ENCODE measurements at regions of chr15 and their contacts with region 1.

Region 1: DNA sequence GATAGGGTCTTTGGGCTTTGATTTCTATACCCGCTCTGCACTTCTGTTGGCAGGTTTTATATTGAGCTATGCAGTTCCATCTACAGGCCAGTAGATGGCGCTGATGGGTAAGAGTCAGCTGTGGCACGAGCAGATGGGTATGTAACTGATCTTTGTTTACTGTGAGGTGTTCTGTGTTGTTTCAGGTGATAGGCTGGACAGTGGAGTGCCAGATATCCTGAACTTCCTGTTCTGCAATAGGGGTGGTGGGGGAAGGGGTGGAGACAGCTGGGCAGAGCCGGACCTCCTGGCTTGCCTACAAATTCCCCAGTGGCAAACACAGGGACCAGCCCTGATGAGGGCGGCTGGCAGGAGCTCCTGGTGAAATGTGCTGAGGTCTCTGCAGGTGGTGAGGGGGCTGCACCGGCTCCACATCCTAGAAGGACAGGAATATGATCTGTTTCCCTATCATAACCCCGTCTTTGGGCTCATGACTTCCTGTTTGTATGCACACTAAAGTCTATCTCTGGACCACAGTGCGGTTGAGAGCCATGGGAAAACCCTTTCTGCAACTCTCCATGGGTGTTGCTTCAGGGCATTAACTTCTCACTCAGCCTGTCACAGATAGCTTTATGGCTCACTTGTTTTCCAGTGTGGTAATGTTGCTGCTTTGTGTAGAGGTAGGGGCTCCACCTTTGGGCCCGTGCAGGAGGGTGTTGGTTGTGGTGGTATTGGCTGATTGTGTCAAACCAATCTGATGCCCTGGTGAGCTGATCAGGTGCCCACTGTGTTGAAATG is 13.4 kb upstream of the FAM98B start:
- DNase-seq: peak; percentile 64
- H3K4me3 Mint-ChIP-seq: no peak overlapping the region
- H3K27ac Mint-ChIP-seq: no peak overlapping the region
- H3K4me1 Mint-ChIP-seq: peaks cover 11% of the 10 kb centered on the region
- H3K27me3 Mint-ChIP-seq: peaks cover 49% of the 10 kb centered on the region

Region 2: DNA sequence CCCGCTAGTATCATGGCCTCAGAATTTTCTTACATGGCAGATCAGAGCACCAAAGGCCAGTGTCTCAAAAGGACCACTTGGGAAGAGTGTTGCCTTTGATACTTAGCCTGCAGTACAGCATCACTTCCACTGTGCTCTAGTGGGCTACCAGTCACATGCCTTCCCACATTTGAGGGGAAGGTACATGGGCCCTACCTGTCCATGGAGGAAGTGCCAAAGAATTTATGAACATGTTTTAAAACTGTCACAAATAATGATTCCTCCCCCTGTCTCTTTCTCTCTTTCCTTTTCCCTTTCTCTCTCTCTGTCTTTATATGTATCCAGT is 10.1 kb before region 1 on chr15:
- CTCF ChIA-PET with region 1: interaction called, 16 read pairs
- DNase-seq: no peak
- H3K4me3 Mint-ChIP-seq: no peak overlapping the region
- H3K27ac Mint-ChIP-seq: no peak overlapping the region
- H3K4me1 Mint-ChIP-seq: no peaks in the 10 kb centered on the region
- H3K27me3 Mint-ChIP-seq: peaks cover 41% of the 10 kb centered on the region

Region 3: GRCh38 chr15:38461066-38461833 is 20.7 kb after region 1 on chr15:
- CTCF ChIA-PET with region 1: interaction called, 10 read pairs
- DNase-seq: no peak
- H3K4me3 Mint-ChIP-seq: no peak overlapping the region
- H3K27ac Mint-ChIP-seq: no peak overlapping the region
- H3K4me1 Mint-ChIP-seq: peaks cover 34% of the 10 kb centered on the region
- H3K27me3 Mint-ChIP-seq: no peaks in the 10 kb centered on the region

Region 4: DNA sequence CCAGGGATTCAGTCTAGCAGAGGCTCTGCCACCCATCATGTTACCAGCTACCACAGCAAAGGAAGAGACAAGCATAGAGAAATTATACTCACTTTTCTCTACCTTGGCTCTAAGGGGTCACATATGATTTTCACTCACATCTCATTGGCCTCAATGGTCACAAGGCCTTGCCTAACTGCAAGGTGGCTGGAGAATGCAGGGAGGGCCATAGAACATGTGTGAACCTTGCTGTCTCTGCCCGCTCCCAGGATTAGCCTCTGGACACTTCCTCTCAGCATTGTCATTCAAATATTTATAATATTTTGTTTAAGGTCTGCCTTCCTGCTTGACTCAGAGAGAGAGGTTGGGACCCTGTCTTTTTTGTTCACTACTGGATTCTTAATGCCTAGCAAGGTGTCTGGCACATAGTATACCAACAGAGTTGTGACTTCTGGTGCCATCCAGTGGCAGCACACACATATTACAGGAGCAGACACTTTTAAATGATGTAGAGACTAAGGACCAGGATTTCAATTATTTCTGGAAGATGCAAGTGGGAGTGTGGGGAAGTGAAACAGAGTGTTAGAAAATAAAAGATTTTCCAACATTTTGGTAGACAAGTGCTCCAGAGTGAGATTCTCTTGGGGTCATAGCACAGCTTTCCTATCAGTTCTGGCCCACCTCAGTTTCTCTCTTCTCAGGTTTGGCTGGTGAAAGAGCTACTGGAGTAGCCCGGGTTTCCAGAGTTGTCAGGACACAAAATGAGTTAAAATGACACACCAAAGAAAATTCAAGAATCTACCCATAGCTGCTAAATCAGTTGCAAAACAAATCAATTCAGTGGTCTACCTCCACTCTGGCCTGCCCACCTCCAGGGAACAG is 243.1 kb after region 1 on chr15:
- CTCF ChIA-PET with region 1: interaction called, 124 read pairs
- DNase-seq: peak; percentile 84
- H3K4me3 Mint-ChIP-seq: peak overlapping the region; percentile 35
- H3K27ac Mint-ChIP-seq: peak overlapping the region; percentile 98
- H3K4me1 Mint-ChIP-seq: peaks cover 79% of the 10 kb centered on the region
- H3K27me3 Mint-ChIP-seq: no peaks in the 10 kb centered on the region

Region 5: DNA sequence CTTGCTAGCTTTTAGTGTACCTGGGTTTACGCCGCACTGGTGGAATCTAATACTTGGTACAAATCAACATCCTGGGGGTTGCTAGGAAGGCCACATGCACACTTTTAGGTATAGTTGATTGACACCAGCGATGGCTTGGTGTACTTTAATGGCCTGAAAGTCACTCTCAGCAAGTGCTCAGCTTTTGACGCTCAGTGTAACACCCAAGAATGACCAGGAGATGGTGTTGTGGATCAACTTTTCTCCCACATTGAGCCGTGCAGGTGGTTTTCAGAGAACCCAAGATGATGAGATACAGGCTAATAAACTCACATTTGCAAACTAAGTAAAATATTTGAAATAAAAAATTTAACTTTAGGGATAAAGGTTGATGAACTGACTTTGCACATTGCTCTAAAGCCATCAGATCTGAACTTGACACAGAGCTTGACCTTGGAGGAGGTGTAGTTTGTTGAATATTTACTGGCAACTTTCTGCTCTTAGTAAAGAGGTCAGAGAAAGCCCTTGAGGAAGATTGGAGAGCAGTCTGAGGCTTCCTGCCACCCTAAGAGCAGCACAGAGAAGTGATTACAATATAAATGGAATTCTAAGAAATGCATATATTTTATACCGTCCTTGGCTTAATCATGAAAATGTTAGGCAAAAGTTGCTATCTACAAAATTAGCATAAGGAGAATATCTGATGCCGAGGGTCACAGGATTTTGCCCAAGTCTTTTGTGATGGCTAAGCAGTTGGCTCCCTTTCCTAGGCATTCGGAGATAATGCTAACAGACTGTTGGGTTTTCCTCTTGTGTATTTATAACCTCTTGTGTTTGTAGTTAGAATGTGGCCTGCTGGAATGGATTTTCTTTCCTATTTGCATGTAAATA is 267.5 kb after region 1 on chr15:
- CTCF ChIA-PET with region 1: interaction called, 169 read pairs
- DNase-seq: peak; percentile 54
- H3K4me3 Mint-ChIP-seq: no peak overlapping the region
- H3K27ac Mint-ChIP-seq: no peak overlapping the region
- H3K4me1 Mint-ChIP-seq: peaks cover 20% of the 10 kb centered on the region
- H3K27me3 Mint-ChIP-seq: peaks cover 20% of the 10 kb centered on the region